Right ventricle myocardium inferior (tissue), 1 donor: ENCODE measurements at regions of chr4 and their contacts with region 1.

Region 1: GRCh38 chr4:78864405-78865024 is 74.7 kb downstream of the PAQR3 start:
- DNase-seq: no peak
- ATAC-seq: peak; percentile 57

Region 2: GRCh38 chr4:78612398-78613178 is 251.9 kb before region 1 on chr4:
- intact Hi-C with region 1: loop called (anchors 1 kb)
- DNase-seq: no peak
- ATAC-seq: peak; percentile 72